Right lobe of liver (tissue), 6 donors: ENCODE measurements at regions of chr14 and their contacts with region 1.

Region 1: DNA sequence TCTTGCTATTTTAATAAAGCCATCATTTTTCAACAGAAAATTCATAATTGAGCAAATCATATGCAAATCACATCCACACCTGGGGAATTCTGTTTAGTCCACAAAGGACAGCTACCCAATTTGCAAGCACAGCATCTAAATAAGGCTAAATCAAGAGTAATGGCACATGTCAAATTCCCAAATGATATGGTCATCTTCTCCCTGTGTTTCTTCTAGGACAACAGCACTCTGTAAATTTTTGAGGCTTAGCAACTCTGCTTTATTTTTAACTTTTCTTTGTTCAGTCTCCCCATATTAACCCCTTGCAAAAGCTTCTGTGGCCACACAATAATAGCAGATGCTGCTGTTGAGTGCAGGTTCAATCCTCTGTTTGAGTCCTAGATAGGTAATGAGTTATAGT is 155.6 kb upstream of the DAAM1 start:
- DNase-seq: no peak
- ATAC-seq: no peak
- H3K4me3 ChIP-seq: no peak overlapping the region
- H3K27ac ChIP-seq: no peak overlapping the region
- H3K4me1 ChIP-seq: no peaks in the 10 kb centered on the region
- H3K27me3 ChIP-seq: no peaks in the 10 kb centered on the region
- CTCF ChIP-seq: no peak
- POLR2A ChIP-seq: no peak

Region 2: DNA sequence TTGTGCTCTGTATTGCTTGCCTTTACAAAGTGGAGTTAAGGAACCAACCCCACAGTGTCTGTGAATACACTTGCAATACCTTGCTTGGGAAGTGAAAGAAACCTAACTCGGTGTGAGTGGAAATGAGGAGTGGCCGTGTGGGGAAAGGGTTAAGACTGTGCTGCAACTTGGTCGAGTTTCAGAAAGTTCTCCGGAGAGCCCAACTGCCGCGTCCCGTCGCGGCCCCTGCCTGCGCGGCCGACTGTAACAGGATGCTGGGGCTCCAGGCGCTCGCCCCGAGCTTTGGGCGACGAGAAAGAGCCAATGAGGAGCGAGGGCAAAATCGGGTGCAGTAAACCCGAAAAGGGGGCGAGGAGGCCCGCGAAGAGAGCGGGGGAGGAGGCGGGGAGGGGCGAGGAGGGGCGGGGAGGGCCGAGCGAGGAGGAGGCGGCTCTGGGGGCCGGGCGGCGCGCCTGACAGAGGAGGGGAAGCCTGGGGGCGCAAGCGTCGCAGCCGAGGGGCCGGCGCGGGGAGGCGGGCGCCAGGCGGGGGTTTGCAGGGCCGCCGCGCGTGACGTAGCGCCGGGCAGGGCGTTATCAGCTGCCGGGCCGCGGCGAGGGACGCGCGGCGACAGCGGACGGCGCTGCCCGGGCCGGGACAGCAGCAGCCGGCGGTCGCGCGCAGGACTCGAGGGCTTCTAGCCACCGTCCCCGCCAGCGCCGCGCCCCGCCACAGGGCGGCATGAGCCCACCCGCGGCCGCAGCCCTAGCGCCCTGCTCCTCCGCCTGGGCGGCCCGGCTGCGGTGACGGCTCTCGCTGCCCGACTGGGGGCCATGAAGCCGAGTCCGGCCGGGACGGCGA is 395.2 kb before region 1 on chr14 and contains the start of gene DACT1:
- intact Hi-C with region 1: loop called in 1 of 2 experiments (anchors 10 kb)
- DNase-seq: peak; percentile 65 to 75 (median 70)
- ATAC-seq: peak; percentile 70 to 84 (median 78)
- H3K4me3 ChIP-seq: peak within 1 kb of the TSS; percentile 47 to 63 (median 53)
- H3K27ac ChIP-seq: peak within 1 kb of the TSS; percentile 67 to 81 (median 78)
- H3K4me1 ChIP-seq: peaks cover 0 to 13% (median 2%) of the 10 kb centered on the region in 4 donors
- H3K27me3 ChIP-seq: no peaks in the 10 kb centered on the region
- CTCF ChIP-seq: no peak
- POLR2A ChIP-seq: peak; percentile 49
- total RNA-seq, gene DACT1: 1.2 to 2.4 (median 1.4) TPM